ENCODE measurements at regions of chr12 and their contacts with region 1.

Region 1: GRCh38 chr12:98653866-98654493 is 8.9 kb downstream of the APAF1 start:
- H3K4me3 Mint-ChIP-seq: no peak overlapping the region
- H3K27ac Mint-ChIP-seq: no peak overlapping the region
- H3K4me1 Mint-ChIP-seq: peaks cover 15% of the 10 kb centered on the region
- H3K27me3 Mint-ChIP-seq: no peaks in the 10 kb centered on the region

Region 2: DNA sequence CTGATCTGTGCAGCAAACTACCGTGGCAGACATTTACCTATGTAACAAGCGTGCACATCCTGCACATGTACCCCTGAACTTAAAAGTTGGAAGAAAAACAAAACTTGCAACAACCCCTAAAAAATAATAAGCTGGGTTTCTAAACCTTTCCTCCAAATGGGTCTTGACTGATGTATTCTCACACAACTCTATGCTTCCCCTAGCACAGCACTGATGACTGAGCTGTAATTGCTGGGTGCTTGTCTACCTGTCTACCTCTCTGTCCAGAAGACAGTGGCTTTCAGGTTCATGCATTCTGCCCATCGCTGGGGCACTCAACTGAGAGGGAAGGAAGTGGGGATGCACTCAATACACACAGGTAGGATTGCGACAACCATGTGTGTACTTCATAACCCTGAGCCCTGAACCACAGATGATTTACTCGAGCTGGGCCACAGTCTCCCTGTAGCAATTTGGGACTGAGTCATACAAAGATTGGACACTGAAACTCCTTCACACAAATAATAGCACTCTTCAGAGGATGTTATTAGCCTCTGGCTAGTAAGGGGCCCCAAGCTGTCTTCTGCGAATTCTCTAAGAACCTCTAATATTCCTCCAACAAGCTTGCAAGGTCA is 183.4 kb before region 1 on chr12:
- intact Hi-C with region 1: no loop called
- H3K4me3 Mint-ChIP-seq: no peak overlapping the region
- H3K27ac Mint-ChIP-seq: no peak overlapping the region
- H3K4me1 Mint-ChIP-seq: peaks cover 29% of the 10 kb centered on the region
- H3K27me3 Mint-ChIP-seq: no peaks in the 10 kb centered on the region

Region 3: GRCh38 chr12:98572010-98572409 is 82.0 kb before region 1 on chr12:
- intact Hi-C with region 1: loop called (anchors 2 kb)
- H3K4me3 Mint-ChIP-seq: no peak overlapping the region
- H3K27ac Mint-ChIP-seq: no peak overlapping the region
- H3K4me1 Mint-ChIP-seq: no peaks in the 10 kb centered on the region
- H3K27me3 Mint-ChIP-seq: no peaks in the 10 kb centered on the region

Region 4: GRCh38 chr12:98612696-98613334 is 41.2 kb before region 1 on chr12:
- intact Hi-C with region 1: no loop called
- H3K4me3 Mint-ChIP-seq: peak overlapping the region; percentile 39
- H3K27ac Mint-ChIP-seq: peak overlapping the region; percentile 94
- H3K4me1 Mint-ChIP-seq: peaks cover 52% of the 10 kb centered on the region
- H3K27me3 Mint-ChIP-seq: no peaks in the 10 kb centered on the region

Measured in dendritic cell treated with granulocyte-macrophage colony-stimulating factor and Interleukin-4, amounts not matched to agents 40 ng/mL and 50 ng/mL, for 4 days (primary cell).